ENCODE measurements at regions of chr2 and their contacts with region 1.

Region 1: DNA sequence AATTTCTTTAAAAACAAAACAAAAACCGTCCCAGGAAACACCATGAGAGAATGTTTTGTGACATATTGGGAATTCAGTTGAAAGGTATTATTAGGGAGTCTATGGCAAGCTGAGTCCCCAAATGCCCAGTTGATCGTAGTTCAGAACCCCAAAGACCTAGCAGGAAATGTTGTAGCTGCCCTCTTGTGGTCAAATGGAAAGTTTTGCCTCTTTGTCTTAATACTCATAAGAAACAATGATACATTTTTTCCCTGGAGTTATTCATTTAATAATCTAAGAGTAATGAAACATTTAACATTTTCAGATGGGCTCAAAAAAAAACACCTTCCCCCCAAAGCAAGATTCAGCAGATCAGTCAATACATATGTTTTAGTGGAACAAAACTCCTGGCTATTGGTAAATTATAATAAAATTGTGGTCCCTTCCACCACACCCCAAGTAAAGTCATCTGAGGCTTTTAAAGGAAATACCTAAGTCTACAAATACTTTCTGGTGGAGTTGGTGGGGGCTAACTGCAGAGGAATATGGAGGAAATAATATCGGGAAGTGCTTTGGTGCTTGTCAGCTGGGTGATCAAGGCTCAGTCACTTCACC is 37.8 kb upstream of the EFEMP1 start:
- DNase-seq: no peak
- H3K4me3 ChIP-seq: no peak overlapping the region
- H3K27ac ChIP-seq: no peak overlapping the region
- H3K27me3 ChIP-seq: peaks cover 0 to 3% (median 0%) of the 10 kb centered on the region in 45 donors
- CTCF ChIP-seq: peak; percentile 46 to 80 (median 67)

Region 2: GRCh38 chr2:55718165-55719008 is 243.0 kb before region 1 on chr2:
- intact Hi-C with region 1: loop called in 1 of 2 experiments (anchors 2 kb)
- DNase-seq: peak in 4 of 10 donors; percentile 32 to 71 (median 50)
- H3K4me3 ChIP-seq: no peak overlapping the region
- H3K27ac ChIP-seq: no peak overlapping the region
- H3K27me3 ChIP-seq: peaks cover 0 to 4% (median 0%) of the 10 kb centered on the region in 45 donors
- CTCF ChIP-seq: peak; percentile 77 to 97 (median 88)

Region 3: DNA sequence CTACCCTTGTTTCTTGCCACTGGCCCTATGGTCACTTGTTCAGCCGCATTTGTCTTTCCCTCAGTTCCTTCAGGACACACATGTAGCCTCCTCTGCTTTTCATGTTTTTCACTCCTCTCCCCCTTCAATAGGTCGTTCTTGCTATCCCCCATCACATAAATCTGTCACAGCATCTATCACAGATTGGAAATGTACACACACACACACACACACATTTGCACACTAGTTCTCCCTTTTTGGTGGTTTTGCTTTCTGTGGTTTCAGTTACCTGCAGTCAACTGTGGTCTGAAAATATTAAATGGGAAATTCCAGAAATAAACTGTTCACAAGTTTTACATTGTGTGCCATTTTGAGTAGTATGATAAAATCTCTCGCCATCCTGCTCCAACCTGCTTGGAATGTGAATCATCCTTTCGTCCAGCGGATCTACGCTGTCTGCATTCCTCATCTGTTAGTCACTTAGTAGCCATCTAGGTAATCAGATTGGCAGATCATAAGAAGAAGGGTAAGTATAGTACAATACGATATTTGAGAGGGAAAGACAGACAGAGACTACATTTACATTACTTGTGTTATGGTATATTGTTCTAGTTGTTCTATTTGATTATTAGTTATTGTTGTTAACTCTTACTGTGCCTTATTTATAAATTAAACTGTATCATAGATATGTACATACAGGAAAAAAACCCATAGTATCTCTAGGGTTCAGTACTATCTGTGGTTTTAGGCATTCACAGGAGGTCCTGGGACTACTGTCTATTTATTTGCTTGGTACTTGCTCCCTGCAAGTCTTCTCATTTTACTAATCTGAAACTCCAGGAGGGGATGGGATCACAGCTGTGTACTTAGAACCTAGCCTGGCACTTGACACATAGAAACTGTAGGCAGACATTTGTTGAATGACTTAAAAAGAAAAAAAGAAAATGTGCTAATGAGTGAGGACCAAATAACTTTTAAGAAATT is 181.7 kb before region 1 on chr2:
- intact Hi-C with region 1: loop called in 1 of 2 experiments (anchors 5 kb)
- DNase-seq: no peak
- H3K4me3 ChIP-seq: no peak overlapping the region
- H3K27ac ChIP-seq: no peak overlapping the region
- H3K27me3 ChIP-seq: no peaks in the 10 kb centered on the region
- CTCF ChIP-seq: no peak

Region 4: DNA sequence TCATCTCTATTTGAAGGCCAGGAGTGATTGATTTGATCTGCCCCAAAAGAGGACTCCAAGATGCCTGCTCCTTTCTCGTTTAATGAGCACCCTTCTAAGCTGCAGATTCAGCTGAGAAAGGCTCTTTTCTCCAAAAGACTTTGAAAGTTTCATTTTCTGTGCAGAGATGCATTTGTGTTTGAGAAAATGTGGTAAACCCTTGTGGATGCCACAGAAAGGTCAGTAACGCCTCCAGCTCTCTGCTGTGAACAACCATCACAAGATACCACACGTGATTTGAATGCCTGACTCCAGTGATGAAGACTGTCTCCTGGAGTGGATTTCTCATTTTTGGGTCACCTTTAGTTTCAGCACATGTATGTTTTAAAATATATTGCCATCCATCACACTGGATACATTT is 187.4 kb after region 1 on chr2:
- intact Hi-C with region 1: no loop called
- DNase-seq: no peak
- H3K4me3 ChIP-seq: no peak overlapping the region
- H3K27ac ChIP-seq: no peak overlapping the region
- H3K27me3 ChIP-seq: peaks cover 0 to 2% (median 0%) of the 10 kb centered on the region in 45 donors
- CTCF ChIP-seq: no peak

Measured in dorsolateral prefrontal cortex (tissue), 120 donors.